ENCODE measurements at regions of chr5 and their contacts with region 1.

Region 1: GRCh38 chr5:134637161-134637582 is 4.5 kb upstream of the SAR1B start:
- DNase-seq: peak; percentile 76 to 99
- H3K4me3 ChIP-seq: no peak overlapping the region
- H3K27ac ChIP-seq: peak overlapping the region; percentile 78
- H3K4me1 ChIP-seq: peaks cover 17% of the 10 kb centered on the region
- H3K27me3 ChIP-seq: no peaks in the 10 kb centered on the region
- CTCF ChIP-seq: no peak

Region 2: DNA sequence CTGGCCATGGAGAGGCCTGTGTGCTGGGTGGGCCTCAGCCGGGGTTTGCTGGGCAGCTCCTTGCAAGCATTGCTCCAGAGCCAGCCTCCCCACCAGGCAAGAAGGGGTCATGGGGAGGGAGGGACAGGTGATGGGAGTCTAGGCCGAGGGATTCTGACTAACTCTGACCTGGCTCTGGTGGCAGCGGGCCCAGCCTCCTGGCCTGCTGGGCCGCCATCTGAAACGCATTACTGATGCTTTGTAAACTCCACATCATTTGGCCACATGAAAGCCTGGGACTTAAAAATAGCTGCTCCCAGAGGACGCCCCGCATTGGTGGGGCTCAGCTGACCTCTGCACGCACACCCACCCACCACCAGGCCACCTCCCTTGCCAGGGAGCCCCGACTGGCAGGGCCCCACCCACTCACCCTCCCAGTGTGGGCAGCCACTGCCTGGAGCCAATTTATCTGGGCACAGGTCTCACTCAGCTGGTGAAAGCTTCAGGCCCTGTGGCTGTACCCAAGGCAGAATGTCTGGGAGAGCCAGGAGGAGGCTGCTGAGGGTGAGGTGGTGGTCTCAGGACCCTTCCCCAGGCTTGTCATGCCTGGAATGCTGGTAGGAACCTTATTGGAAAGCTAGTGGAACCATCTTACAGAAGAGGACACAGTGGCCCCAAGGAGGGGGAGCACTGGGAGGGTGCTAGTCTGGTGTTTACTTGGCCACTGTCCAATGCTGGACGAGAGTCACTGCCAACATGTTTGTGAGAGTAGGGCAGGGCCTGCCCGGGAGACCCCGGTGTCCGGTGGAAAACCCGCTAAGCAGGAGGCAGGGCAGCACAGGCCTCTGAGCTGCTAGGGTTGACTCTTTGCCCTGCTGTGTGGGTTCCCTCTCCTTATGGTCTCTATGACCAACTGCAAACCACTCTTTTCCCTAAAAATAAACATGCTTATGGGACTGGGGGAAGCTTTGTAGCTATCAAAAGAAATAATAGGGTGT is 511.8 kb before region 1 on chr5:
- CTCF ChIA-PET with region 1: interaction called, 12 read pairs
- POLR2A ChIA-PET with region 1: no interaction called
- intact Hi-C with region 1: no loop called
- DNase-seq: peak; percentile 75 to 77
- H3K4me3 ChIP-seq: no peak overlapping the region
- H3K27ac ChIP-seq: peak overlapping the region; percentile 40
- H3K4me1 ChIP-seq: peaks cover 23% of the 10 kb centered on the region
- H3K27me3 ChIP-seq: no peaks in the 10 kb centered on the region
- CTCF ChIP-seq: no peak

Region 3: GRCh38 chr5:134204575-134204974 is 432.6 kb before region 1 on chr5:
- CTCF ChIA-PET with region 1: interaction called, 16 read pairs
- POLR2A ChIA-PET with region 1: no interaction called
- intact Hi-C with region 1: no loop called
- DNase-seq: no peak
- H3K4me3 ChIP-seq: no peak overlapping the region
- H3K27ac ChIP-seq: no peak overlapping the region
- H3K4me1 ChIP-seq: no peaks in the 10 kb centered on the region
- H3K27me3 ChIP-seq: no peaks in the 10 kb centered on the region
- CTCF ChIP-seq: no peak

Region 4: GRCh38 chr5:134489227-134489944 is 147.8 kb before region 1 on chr5:
- CTCF ChIA-PET with region 1: no interaction called
- POLR2A ChIA-PET with region 1: no interaction called
- intact Hi-C with region 1: no loop called
- DNase-seq: no peak
- H3K4me3 ChIP-seq: no peak overlapping the region
- H3K27ac ChIP-seq: no peak overlapping the region
- H3K4me1 ChIP-seq: no peaks in the 10 kb centered on the region
- H3K27me3 ChIP-seq: no peaks in the 10 kb centered on the region
- CTCF ChIP-seq: no peak

Region 5: DNA sequence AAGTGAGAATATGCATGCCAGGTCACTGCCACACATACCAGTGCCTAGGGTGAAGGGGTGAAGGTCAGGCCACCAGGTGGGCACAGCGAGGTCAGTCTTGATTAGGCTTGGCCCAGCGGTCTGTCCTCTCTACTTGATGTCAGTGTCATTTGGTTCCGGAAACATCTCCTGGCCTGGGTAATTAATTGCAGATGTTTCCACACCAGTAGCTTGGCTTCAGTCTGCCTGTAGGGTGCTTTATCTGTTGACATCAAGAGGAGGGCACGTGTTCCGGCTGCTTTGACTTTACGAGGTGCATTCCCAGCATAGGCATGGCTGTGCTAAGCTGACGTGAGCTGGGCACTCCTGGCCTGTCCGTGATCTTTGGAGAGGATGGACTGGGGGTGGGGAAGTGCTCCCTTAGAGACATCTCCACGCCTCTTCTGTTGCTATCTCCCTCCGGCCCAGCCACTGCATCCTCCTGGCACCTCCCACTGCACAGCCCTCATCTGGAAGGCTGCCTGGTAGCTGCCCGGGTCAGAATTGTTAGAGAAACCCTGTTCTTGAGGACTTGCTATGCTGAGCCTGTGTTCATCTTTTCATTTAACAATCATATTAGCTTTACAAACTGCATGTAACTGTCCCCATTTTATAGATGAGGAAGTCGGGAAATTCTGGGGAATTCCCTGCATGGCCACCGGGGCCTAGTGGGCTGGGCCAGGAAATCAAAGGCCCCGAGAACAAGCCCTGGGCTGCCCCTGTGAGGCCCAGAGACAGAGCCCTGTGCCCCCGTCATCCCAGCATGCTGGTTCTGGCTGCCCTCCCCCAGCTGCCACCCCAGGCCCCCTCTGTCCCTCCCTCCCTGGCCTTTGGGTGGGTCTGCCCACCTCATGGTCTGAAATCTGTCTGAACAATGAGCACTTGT is 82.6 kb before region 1 on chr5:
- CTCF ChIA-PET with region 1: no interaction called
- POLR2A ChIA-PET with region 1: no interaction called
- intact Hi-C with region 1: no loop called
- DNase-seq: peak in 1 of 2 experiments; percentile 35
- H3K4me3 ChIP-seq: no peak overlapping the region
- H3K27ac ChIP-seq: no peak overlapping the region
- H3K4me1 ChIP-seq: 0 out of 2 replicates have a peak, but pooled peaks cover 5% of the 10 kb centered on the region
- H3K27me3 ChIP-seq: no peaks in the 10 kb centered on the region
- CTCF ChIP-seq: no peak

Region 6: DNA sequence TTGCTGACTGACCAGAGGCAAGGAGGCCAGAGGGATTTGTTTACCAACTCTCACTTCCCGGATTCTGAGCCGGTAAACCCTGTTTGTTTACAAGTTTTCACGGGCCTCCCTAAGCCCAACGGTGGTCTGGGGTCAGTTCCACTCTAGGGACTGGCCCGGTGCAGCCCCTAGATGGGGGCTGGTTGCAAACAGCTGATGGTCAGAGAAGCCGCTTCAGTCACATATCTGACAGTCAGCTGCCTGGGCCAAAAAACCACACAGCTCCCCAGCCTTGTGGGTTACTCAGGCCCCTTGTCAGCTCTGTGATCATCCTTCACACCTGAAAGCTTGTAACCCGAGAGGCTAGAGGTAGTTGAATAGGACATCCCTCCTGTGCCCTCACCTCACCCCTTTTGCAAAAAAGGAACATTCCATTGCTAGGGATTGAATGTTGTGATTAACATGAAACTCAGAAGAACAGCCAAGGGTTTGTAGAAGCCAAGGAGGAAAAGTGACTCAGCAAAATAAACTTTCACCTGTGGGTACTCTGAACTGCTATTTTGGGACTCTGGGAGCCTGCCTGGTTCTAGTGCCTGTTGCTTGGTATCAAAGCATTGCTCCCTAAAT is 44.9 kb before region 1 on chr5:
- CTCF ChIA-PET with region 1: no interaction called
- POLR2A ChIA-PET with region 1: no interaction called
- intact Hi-C with region 1: loop called (anchors 5 kb)
- DNase-seq: peak; percentile 61 to 94
- H3K4me3 ChIP-seq: peak overlapping the region; percentile 8; the same call in 1 of the 2 replicates
- H3K27ac ChIP-seq: peak overlapping the region; percentile 82
- H3K4me1 ChIP-seq: peaks cover 34% of the 10 kb centered on the region
- H3K27me3 ChIP-seq: no peaks in the 10 kb centered on the region
- CTCF ChIP-seq: no peak

Region 7: DNA sequence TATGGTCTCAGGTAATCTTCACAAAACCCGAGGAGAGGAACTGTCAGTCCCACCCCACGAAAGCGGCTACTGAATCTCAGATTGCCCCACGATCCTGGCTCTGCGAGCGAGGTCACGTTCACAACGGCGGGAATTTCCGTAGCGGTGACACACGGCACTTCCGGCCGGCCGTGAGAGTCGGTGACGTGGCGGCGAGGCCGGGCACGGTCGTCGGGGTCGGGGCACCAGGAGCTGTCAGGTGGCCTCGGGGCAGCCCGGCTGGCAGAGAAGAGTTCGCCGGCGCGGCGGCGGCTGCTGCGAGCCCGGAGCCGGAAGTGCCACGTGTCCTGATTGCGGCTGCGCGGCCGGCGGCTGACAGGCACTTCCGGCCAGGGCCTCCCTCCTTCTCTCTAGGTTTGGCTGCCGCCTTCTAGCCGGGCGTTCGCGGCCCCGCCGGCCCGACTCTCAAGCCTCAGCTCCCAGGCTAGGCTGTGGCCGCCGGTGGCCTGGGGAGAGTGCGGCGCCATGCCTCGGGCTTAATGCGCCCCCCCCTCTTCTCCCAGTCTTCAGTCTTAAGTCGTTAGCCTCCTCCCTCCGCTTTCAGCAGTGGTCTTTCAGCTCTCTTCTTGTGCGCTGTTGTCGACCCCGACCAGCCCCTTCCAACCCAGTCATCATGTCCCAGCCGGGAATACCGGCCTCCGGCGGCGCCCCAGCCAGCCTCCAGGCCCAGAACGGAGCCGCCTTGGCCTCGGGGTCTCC is 11.4 kb after region 1 on chr5 and contains the start of gene SEC24A:
- CTCF ChIA-PET with region 1: no interaction called
- POLR2A ChIA-PET with region 1: no interaction called
- intact Hi-C with region 1: loop called (anchors 1 kb)
- DNase-seq: peak; percentile 84 to 90
- H3K4me3 ChIP-seq: peak within 1 kb of the TSS; percentile 96
- H3K27ac ChIP-seq: peak within 1 kb of the TSS; percentile 97
- H3K4me1 ChIP-seq: peaks cover 28% of the 10 kb centered on the region
- H3K27me3 ChIP-seq: no peaks in the 10 kb centered on the region
- CTCF ChIP-seq: no peak
- total RNA-seq, gene SEC24A: 10.4 and 16.2 TPM in 2 replicates

Region 8: GRCh38 chr5:135602882-135603721 is 965.9 kb after region 1 on chr5:
- CTCF ChIA-PET with region 1: no interaction called
- POLR2A ChIA-PET with region 1: no interaction called
- intact Hi-C with region 1: no loop called
- DNase-seq: no peak
- H3K4me3 ChIP-seq: no peak overlapping the region
- H3K27ac ChIP-seq: no peak overlapping the region
- H3K4me1 ChIP-seq: no peaks in the 10 kb centered on the region
- H3K27me3 ChIP-seq: peaks cover 87% of the 10 kb centered on the region
- CTCF ChIP-seq: no peak

Measured in PC-9 (cell line).